Calu3 (cell line): ENCODE measurements at regions of chr1 and their contacts with region 1.

Region 1: GRCh38 chr1:226608699-226609505 is 60.3 kb downstream of the STUM start:
- DNase-seq: peak; percentile 76
- H3K4me3 Mint-ChIP-seq: no peak overlapping the region
- H3K27ac Mint-ChIP-seq: no peak overlapping the region
- H3K4me1 Mint-ChIP-seq: no peaks in the 10 kb centered on the region
- H3K27me3 Mint-ChIP-seq: peaks cover 90% of the 10 kb centered on the region
- CTCF ChIP-seq: peak; percentile 86

Region 2: DNA sequence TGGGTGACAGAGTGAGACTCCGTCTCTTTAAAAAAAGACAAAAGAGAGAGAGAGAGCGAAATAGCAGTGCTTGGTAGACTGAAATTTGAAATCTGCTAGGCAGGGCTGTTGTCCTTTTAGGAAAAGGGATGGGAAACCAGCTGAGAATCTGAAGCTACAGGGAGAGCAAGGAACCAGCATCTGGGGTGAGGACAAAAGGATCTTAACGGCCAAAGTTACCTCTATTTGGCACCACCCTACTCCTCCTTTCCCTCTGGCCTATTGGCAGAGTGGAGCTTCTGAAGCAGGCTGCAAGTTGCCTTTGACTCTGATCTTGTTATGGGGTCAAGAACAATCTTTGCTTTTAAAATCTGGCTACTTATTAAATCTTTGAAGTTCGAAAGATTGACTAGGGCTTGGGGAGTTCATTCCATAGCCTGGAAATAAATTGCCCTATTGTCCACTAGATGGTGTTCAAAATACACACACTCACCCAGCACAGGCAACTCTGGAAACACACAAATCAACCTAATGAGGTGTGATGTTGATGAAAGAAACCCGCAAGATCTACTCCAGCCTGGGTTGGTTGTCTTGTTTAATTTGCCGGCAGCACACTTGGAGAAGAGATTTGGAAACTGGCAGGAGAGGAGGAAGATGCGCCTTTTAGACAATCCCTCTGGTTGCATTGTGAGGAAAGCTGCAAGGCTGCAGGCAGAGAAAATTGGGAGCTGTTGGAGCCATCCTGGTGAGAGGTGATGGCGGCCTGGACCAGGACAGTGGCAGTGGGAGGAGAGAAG is 184.5 kb before region 1 on chr1:
- CTCF ChIA-PET with region 1: interaction called, 4 read pairs
- intact Hi-C with region 1: loop called (anchors 5 kb)
- DNase-seq: no peak
- H3K4me3 Mint-ChIP-seq: no peak overlapping the region
- H3K27ac Mint-ChIP-seq: no peak overlapping the region
- H3K4me1 Mint-ChIP-seq: no peaks in the 10 kb centered on the region
- H3K27me3 Mint-ChIP-seq: peaks cover 22% of the 10 kb centered on the region
- CTCF ChIP-seq: peak; percentile 33